CD4-positive, alpha-beta T cell (primary cell): ENCODE measurements at regions of chr11 and their contacts with region 1.

Region 1: GRCh38 chr11:44911029-44911814 is 39.5 kb downstream of the TP53I11 start:
- DNase-seq: peak; percentile 60 to 93 (median 82)
- ATAC-seq: peak; percentile 83
- H3K4me3 ChIP-seq: no peak overlapping the region
- H3K4me3 Mint-ChIP-seq: no peak overlapping the region
- H3K27ac ChIP-seq: no peak overlapping the region
- H3K27ac Mint-ChIP-seq: no peak overlapping the region
- H3K4me1 ChIP-seq: peaks cover 9% of the 10 kb centered on the region
- H3K4me1 Mint-ChIP-seq: peaks cover 7% of the 10 kb centered on the region
- H3K27me3 ChIP-seq: no peaks in the 10 kb centered on the region
- H3K27me3 Mint-ChIP-seq: no peaks in the 10 kb centered on the region
- CTCF ChIP-seq: peak; percentile 77

Region 2: GRCh38 chr11:44286268-44286880 is 624.8 kb before region 1 on chr11:
- CTCF ChIA-PET with region 1: no interaction called
- POLR2A ChIA-PET with region 1: no interaction called
- intact Hi-C with region 1: loop called (anchors 2 to 5 kb)
- DNase-seq: peak; percentile 27 to 74 (median 41)
- ATAC-seq: peak; percentile 41
- H3K4me3 ChIP-seq: no peak overlapping the region
- H3K4me3 Mint-ChIP-seq: no peak overlapping the region
- H3K27ac ChIP-seq: no peak overlapping the region
- H3K27ac Mint-ChIP-seq: no peak overlapping the region
- H3K4me1 ChIP-seq: no peaks in the 10 kb centered on the region
- H3K4me1 Mint-ChIP-seq: no peaks in the 10 kb centered on the region
- H3K27me3 ChIP-seq: no peaks in the 10 kb centered on the region
- H3K27me3 Mint-ChIP-seq: peaks cover 10% of the 10 kb centered on the region
- CTCF ChIP-seq: peak; percentile 93

Region 3: GRCh38 chr11:44621140-44621681 is 290.0 kb before region 1 on chr11:
- CTCF ChIA-PET with region 1: interaction called, 6 read pairs
- POLR2A ChIA-PET with region 1: no interaction called
- intact Hi-C with region 1: loop called (anchors 1 kb)
- DNase-seq: peak; percentile 30 to 80 (median 60)
- ATAC-seq: peak; percentile 69
- H3K4me3 ChIP-seq: no peak overlapping the region
- H3K4me3 Mint-ChIP-seq: no peak overlapping the region
- H3K27ac ChIP-seq: no peak overlapping the region
- H3K27ac Mint-ChIP-seq: no peak overlapping the region
- H3K4me1 ChIP-seq: peaks cover 38% of the 10 kb centered on the region
- H3K4me1 Mint-ChIP-seq: peaks cover 36% of the 10 kb centered on the region
- H3K27me3 ChIP-seq: no peaks in the 10 kb centered on the region
- H3K27me3 Mint-ChIP-seq: no peaks in the 10 kb centered on the region
- CTCF ChIP-seq: peak; percentile 65

Region 4: GRCh38 chr11:44658506-44658850 is 252.7 kb before region 1 on chr11:
- CTCF ChIA-PET with region 1: no interaction called
- POLR2A ChIA-PET with region 1: no interaction called
- intact Hi-C with region 1: loop called in 1 of 2 experiments (anchors 1 kb)
- DNase-seq: peak in 7 of 14 experiments; percentile 9 to 63 (median 52)
- ATAC-seq: no peak
- H3K4me3 ChIP-seq: no peak overlapping the region
- H3K4me3 Mint-ChIP-seq: no peak overlapping the region
- H3K27ac ChIP-seq: no peak overlapping the region
- H3K27ac Mint-ChIP-seq: no peak overlapping the region
- H3K4me1 ChIP-seq: peaks cover 16% of the 10 kb centered on the region
- H3K4me1 Mint-ChIP-seq: peaks cover 20% of the 10 kb centered on the region
- H3K27me3 ChIP-seq: no peaks in the 10 kb centered on the region
- H3K27me3 Mint-ChIP-seq: peaks cover 13% of the 10 kb centered on the region
- CTCF ChIP-seq: no peak

Region 5: GRCh38 chr11:44893846-44894617 is 17.2 kb before region 1 on chr11:
- CTCF ChIA-PET with region 1: no interaction called
- POLR2A ChIA-PET with region 1: no interaction called
- intact Hi-C with region 1: no loop called
- DNase-seq: peak; percentile 13 to 77 (median 50)
- ATAC-seq: peak; percentile 67
- H3K4me3 ChIP-seq: no peak overlapping the region
- H3K4me3 Mint-ChIP-seq: no peak overlapping the region
- H3K27ac ChIP-seq: no peak overlapping the region
- H3K27ac Mint-ChIP-seq: no peak overlapping the region
- H3K4me1 ChIP-seq: peaks cover 5% of the 10 kb centered on the region
- H3K4me1 Mint-ChIP-seq: no peaks in the 10 kb centered on the region
- H3K27me3 ChIP-seq: no peaks in the 10 kb centered on the region
- H3K27me3 Mint-ChIP-seq: no peaks in the 10 kb centered on the region
- CTCF ChIP-seq: peak; percentile 44

Region 6: GRCh38 chr11:44927174-44927661 is 16.0 kb after region 1 on chr11:
- CTCF ChIA-PET with region 1: interaction called, 12 read pairs
- POLR2A ChIA-PET with region 1: no interaction called
- intact Hi-C with region 1: no loop called
- DNase-seq: peak; percentile 34 to 78 (median 50)
- ATAC-seq: peak; percentile 55
- H3K4me3 ChIP-seq: no peak overlapping the region
- H3K4me3 Mint-ChIP-seq: no peak overlapping the region
- H3K27ac ChIP-seq: no peak overlapping the region
- H3K27ac Mint-ChIP-seq: no peak overlapping the region
- H3K4me1 ChIP-seq: no peaks in the 10 kb centered on the region
- H3K4me1 Mint-ChIP-seq: no peaks in the 10 kb centered on the region
- H3K27me3 ChIP-seq: no peaks in the 10 kb centered on the region
- H3K27me3 Mint-ChIP-seq: no peaks in the 10 kb centered on the region
- CTCF ChIP-seq: peak; percentile 81

Region 7: DNA sequence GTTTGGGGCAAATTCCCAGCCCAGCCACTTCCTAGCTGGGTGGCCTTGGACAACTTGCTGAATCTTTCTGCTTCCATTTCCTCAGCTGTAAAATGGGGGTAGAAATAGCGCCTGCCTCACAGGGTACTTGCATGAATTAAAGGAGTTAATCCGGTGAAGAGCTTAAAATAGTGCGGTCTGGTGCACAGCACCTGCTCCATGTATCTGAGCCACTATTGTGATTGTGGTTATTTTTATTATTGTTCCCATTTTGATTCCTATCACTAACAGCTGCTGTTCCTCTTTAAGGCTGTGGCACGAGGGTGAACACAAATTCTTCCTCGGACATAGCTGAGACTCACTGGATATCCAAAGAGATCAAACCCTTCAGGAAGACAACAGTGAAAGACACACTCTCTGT is 86.3 kb after region 1 on chr11:
- CTCF ChIA-PET with region 1: no interaction called
- POLR2A ChIA-PET with region 1: no interaction called
- intact Hi-C with region 1: no loop called
- DNase-seq: no peak
- ATAC-seq: no peak
- H3K4me3 ChIP-seq: no peak overlapping the region
- H3K4me3 Mint-ChIP-seq: no peak overlapping the region
- H3K27ac ChIP-seq: no peak overlapping the region
- H3K27ac Mint-ChIP-seq: no peak overlapping the region
- H3K4me1 ChIP-seq: no peaks in the 10 kb centered on the region
- H3K4me1 Mint-ChIP-seq: no peaks in the 10 kb centered on the region
- H3K27me3 ChIP-seq: no peaks in the 10 kb centered on the region
- H3K27me3 Mint-ChIP-seq: no peaks in the 10 kb centered on the region
- CTCF ChIP-seq: no peak